ENCODE measurements at regions of chr10 and their contacts with region 1.

Region 1: GRCh38 chr10:12195603-12196506 is at the starts of genes CDC123 and NUDT5:
- DNase-seq: peak; percentile 88 to 95 (median 93)
- H3K4me3 ChIP-seq: peak within 1 kb of the TSS; percentile 66 to 100 (median 96)
- H3K27ac ChIP-seq: peak within 1 kb of the TSS; percentile 94 to 96
- H3K4me1 ChIP-seq: peaks cover 14 to 46% (median 29%) of the 10 kb centered on the region in 4 experiments
- H3K27me3 ChIP-seq: no peaks in the 10 kb centered on the region

Region 2: GRCh38 chr10:12181065-12181775 is 14.6 kb before region 1 on chr10:
- CTCF ChIA-PET with region 1: interaction called, 11 read pairs
- POLR2A ChIA-PET with region 1: interaction called, 7 read pairs
- DNase-seq: peak; percentile 85 to 99 (median 96)
- H3K4me3 ChIP-seq: no peak overlapping the region
- H3K27ac ChIP-seq: no peak overlapping the region
- H3K4me1 ChIP-seq: peaks cover 4 to 22% (median 14%) of the 10 kb centered on the region in 4 experiments
- H3K27me3 ChIP-seq: no peaks in the 10 kb centered on the region